ENCODE measurements at regions of chr20 and their contacts with region 1.

Region 1: DNA sequence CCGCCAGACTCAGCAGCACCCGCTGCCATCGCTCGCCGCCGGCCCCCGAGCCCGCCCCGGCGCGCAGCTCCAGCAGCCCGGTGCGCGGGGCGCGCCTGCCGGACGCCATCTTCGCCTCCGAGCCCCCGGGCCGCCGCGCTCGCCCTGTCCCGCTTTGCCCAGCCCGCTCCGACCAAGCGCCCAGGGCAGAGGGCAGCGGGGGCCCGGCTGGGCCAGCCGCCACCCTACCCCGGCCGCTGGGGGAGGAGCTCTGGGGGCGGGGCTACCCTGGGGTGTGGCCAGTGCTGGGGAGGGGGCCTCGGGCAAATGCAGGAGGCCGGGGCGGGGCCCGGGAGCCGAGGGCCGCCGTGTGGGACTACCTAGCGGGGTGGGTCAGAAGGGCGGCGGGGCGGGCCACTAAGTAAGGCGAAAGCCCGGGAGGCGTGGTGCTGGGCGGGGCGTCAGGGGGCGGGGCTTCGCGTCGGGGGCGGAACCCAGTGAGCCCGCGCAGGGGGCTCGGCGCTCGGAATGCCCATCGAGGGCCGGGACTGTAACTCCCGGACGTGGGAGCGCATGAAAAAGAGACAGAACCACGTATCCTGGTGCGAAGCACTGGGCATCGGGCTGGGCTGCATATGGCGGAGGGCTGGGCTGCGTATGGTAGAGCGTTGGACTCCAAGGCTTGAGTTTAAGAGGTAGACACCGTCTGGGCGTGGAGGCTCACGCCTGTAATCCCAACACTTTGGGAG is at the start of gene SNTA1:
- DNase-seq: peak; percentile 69 to 76 (median 76)
- H3K4me3 ChIP-seq: peak within 1 kb of the TSS; percentile 56 to 94 (median 78)
- H3K4me3 Mint-ChIP-seq: peak within 1 kb of the TSS; percentile 93 to 96
- H3K27ac ChIP-seq: no peak within 1 kb of the TSS
- H3K27ac Mint-ChIP-seq: peak within 1 kb of the TSS in 6 of 7 donors; percentile 30 to 89 (median 81)
- H3K4me1 ChIP-seq: peaks cover 10 to 19% of the 10 kb centered on the region in 2 donors
- H3K4me1 Mint-ChIP-seq: peaks cover 17% of the 10 kb centered on the region
- H3K27me3 ChIP-seq: peaks cover 10 to 15% of the 10 kb centered on the region in 2 donors
- H3K27me3 Mint-ChIP-seq: peaks cover 23 to 29% (median 23%) of the 10 kb centered on the region in 3 donors
- CTCF ChIP-seq: no peak
- polyA plus RNA-seq, gene SNTA1: 0.56 to 0.93 (median 0.63) TPM

Region 2: GRCh38 chr20:33489495-33490022 is 45.9 kb after region 1 on chr20:
- intact Hi-C with region 1: loop called (anchors 2 to 5 kb)
- DNase-seq: peak; percentile 98
- H3K4me3 ChIP-seq: peak overlapping the region; percentile 58 to 72 (median 61)
- H3K4me3 Mint-ChIP-seq: peak overlapping the region; percentile 78 to 81
- H3K27ac ChIP-seq: peak overlapping the region; percentile 91 to 97
- H3K27ac Mint-ChIP-seq: peak overlapping the region; percentile 91 to 97 (median 94)
- H3K4me1 ChIP-seq: peaks cover 12 to 15% of the 10 kb centered on the region in 2 donors
- H3K4me1 Mint-ChIP-seq: peaks cover 18% of the 10 kb centered on the region
- H3K27me3 ChIP-seq: no peaks in the 10 kb centered on the region
- H3K27me3 Mint-ChIP-seq: peaks cover 0 to 2% (median 0%) of the 10 kb centered on the region in 3 donors
- CTCF ChIP-seq: no peak

Region 3: GRCh38 chr20:33674295-33675135 is 230.8 kb after region 1 on chr20 and contains the start of gene NECAB3:
- intact Hi-C with region 1: loop called in 1 of 2 experiments (anchors 5 kb)
- DNase-seq: peak in 2 of 3 donors; percentile 53 to 65
- H3K4me3 ChIP-seq: peak within 1 kb of the TSS; percentile 56 to 74 (median 57)
- H3K4me3 Mint-ChIP-seq: peak within 1 kb of the TSS; percentile 91 to 97
- H3K27ac ChIP-seq: peak within 1 kb of the TSS in 1 of 2 donors; percentile 49
- H3K27ac Mint-ChIP-seq: peak within 1 kb of the TSS; percentile 39 to 91 (median 77)
- H3K4me1 ChIP-seq: peaks cover 14 to 19% of the 10 kb centered on the region in 2 donors
- H3K4me1 Mint-ChIP-seq: peaks cover 17% of the 10 kb centered on the region
- H3K27me3 ChIP-seq: no peaks in the 10 kb centered on the region
- H3K27me3 Mint-ChIP-seq: peaks cover 2 to 8% (median 3%) of the 10 kb centered on the region in 3 donors
- CTCF ChIP-seq: no peak
- polyA plus RNA-seq, gene NECAB3: 1.3 to 12.8 (median 1.8) TPM

Region 4: GRCh38 chr20:33826270-33826897 is 382.7 kb after region 1 on chr20:
- intact Hi-C with region 1: loop called in 1 of 2 experiments (anchors 5 kb)
- DNase-seq: peak in 2 of 3 donors; percentile 15 to 30
- H3K4me3 ChIP-seq: no peak overlapping the region
- H3K4me3 Mint-ChIP-seq: no peak overlapping the region
- H3K27ac ChIP-seq: peak overlapping the region in 1 of 2 donors; percentile 34
- H3K27ac Mint-ChIP-seq: peak overlapping the region; percentile 16 to 83 (median 27)
- H3K4me1 ChIP-seq: peaks cover 16 to 37% of the 10 kb centered on the region in 2 donors
- H3K4me1 Mint-ChIP-seq: peaks cover 63% of the 10 kb centered on the region
- H3K27me3 ChIP-seq: no peaks in the 10 kb centered on the region
- H3K27me3 Mint-ChIP-seq: no peaks in the 10 kb centered on the region
- CTCF ChIP-seq: no peak

Measured in CD14-positive monocyte (primary cell).